ENCODE measurements at regions of chr1 and their contacts with region 1.

Region 1: GRCh38 chr1:222634180-222635013 is 16.5 kb downstream of the MIA3 start:
- DNase-seq: peak; percentile 79
- H3K4me3 ChIP-seq: no peak overlapping the region
- H3K27ac ChIP-seq: 0 out of 2 replicates have a peak overlapping the region, but pooled peaks have one; percentile 9
- H3K4me1 ChIP-seq: peaks cover 8% of the 10 kb centered on the region
- H3K27me3 ChIP-seq: no peaks in the 10 kb centered on the region

Region 2: GRCh38 chr1:222465211-222466041 is 169.0 kb before region 1 on chr1:
- in situ Hi-C with region 1: loop called (anchors 10 kb)
- DNase-seq: peak; percentile 98
- H3K4me3 ChIP-seq: peak overlapping the region; percentile 77
- H3K27ac ChIP-seq: peak overlapping the region; percentile 98
- H3K4me1 ChIP-seq: 0 out of 2 replicates have a peak, but pooled peaks cover 11% of the 10 kb centered on the region
- H3K27me3 ChIP-seq: no peaks in the 10 kb centered on the region

Measured in GM23248 (cell line).